CD14-positive monocyte (primary cell): ENCODE measurements at regions of chr12 and their contacts with region 1.

Region 1: GRCh38 chr12:106386813-106387535 is 29.4 kb downstream of the POLR3B start:
- DNase-seq: no peak
- H3K4me3 ChIP-seq: no peak overlapping the region
- H3K4me3 Mint-ChIP-seq: peak overlapping the region in 1 of 2 donors; percentile 21
- H3K27ac ChIP-seq: no peak overlapping the region
- H3K27ac Mint-ChIP-seq: no peak overlapping the region
- H3K4me1 ChIP-seq: no peaks in the 10 kb centered on the region
- H3K4me1 Mint-ChIP-seq: no peaks in the 10 kb centered on the region
- H3K27me3 ChIP-seq: peaks cover 2 to 6% of the 10 kb centered on the region in 2 donors
- H3K27me3 Mint-ChIP-seq: peaks cover 4 to 13% (median 5%) of the 10 kb centered on the region in 3 donors
- CTCF ChIP-seq: no peak

Region 2: GRCh38 chr12:106345739-106346138 is 41.2 kb before region 1 on chr12:
- intact Hi-C with region 1: no loop called
- DNase-seq: peak in 2 of 3 donors; percentile 16 to 31
- H3K4me3 ChIP-seq: no peak overlapping the region
- H3K4me3 Mint-ChIP-seq: no peak overlapping the region
- H3K27ac ChIP-seq: no peak overlapping the region
- H3K27ac Mint-ChIP-seq: no peak overlapping the region
- H3K4me1 ChIP-seq: no peaks in the 10 kb centered on the region
- H3K4me1 Mint-ChIP-seq: peaks cover 2% of the 10 kb centered on the region
- H3K27me3 ChIP-seq: peaks cover 0 to 3% of the 10 kb centered on the region in 2 donors
- H3K27me3 Mint-ChIP-seq: peaks cover 3 to 14% (median 3%) of the 10 kb centered on the region in 3 donors
- CTCF ChIP-seq: peak; percentile 21

Region 3: GRCh38 chr12:106919910-106920544 is 533.1 kb after region 1 on chr12:
- intact Hi-C with region 1: loop called (anchors 2 to 5 kb)
- DNase-seq: peak; percentile 20 to 66 (median 42)
- H3K4me3 ChIP-seq: no peak overlapping the region
- H3K4me3 Mint-ChIP-seq: peak overlapping the region in 1 of 2 donors; percentile 70
- H3K27ac ChIP-seq: no peak overlapping the region
- H3K27ac Mint-ChIP-seq: no peak overlapping the region
- H3K4me1 ChIP-seq: no peaks in the 10 kb centered on the region
- H3K4me1 Mint-ChIP-seq: no peaks in the 10 kb centered on the region
- H3K27me3 ChIP-seq: peaks cover 100% of the 10 kb centered on the region in 2 donors
- H3K27me3 Mint-ChIP-seq: peaks cover 96 to 99% (median 97%) of the 10 kb centered on the region in 3 donors
- CTCF ChIP-seq: peak; percentile 95

Region 4: DNA sequence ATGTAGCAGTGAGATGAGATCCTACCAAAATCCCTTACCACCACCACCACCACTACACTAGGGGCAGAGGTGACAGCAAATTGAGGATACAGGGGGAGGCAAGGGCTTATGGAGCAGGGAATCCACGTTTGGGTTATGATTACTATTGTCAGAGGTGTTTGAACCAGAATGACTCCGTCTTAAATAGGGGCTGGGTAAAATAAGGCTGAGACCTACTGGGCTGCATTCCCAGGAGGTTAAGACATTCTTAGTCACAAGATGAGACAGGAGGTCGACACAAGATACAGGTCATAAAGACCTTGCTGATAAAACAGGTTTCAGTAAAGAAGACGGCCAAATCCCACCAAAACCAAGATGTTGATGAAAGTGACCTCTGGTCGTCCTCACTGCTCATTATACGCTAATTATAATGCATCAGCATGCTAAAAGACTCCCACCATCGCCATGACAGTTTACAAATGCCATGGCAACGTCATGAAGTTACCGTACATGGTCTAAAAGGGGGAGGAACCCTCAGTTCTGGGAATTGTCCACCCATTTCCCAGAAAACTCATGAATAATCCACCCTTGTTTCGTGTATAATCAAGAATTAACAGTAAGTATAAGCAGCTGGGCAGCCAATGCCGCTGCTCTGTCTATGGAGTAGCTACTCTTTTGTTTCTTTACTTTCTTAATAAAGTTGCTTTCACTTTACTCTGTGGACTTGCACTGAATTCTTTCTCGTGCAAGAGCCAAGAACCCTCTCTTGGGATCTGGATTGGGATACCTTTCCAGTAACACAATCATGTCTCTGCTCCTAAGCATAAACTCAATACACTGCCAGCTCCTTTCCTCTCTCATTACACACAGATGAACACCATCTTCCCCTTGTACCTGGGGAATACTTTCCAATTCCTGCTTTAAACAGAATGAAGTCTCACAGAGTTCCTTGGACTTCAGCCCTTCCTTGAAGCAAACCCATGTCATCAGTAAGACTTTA is 723.1 kb after region 1 on chr12:
- intact Hi-C with region 1: loop called (anchors 10 kb)
- DNase-seq: no peak
- H3K4me3 ChIP-seq: no peak overlapping the region
- H3K4me3 Mint-ChIP-seq: no peak overlapping the region
- H3K27ac ChIP-seq: no peak overlapping the region
- H3K27ac Mint-ChIP-seq: no peak overlapping the region
- H3K4me1 ChIP-seq: no peaks in the 10 kb centered on the region
- H3K4me1 Mint-ChIP-seq: no peaks in the 10 kb centered on the region
- H3K27me3 ChIP-seq: peaks cover 0 to 11% of the 10 kb centered on the region in 2 donors
- H3K27me3 Mint-ChIP-seq: peaks cover 4 to 6% (median 4%) of the 10 kb centered on the region in 3 donors
- CTCF ChIP-seq: no peak